HAP-1 (cell line): ENCODE measurements at regions of chr14 and their contacts with region 1.

Region 1: GRCh38 chr14:67583711-67584644 is 16.1 kb downstream of the PIGH start:
- DNase-seq: peak; percentile 32 to 62
- H3K4me3 ChIP-seq: no peak overlapping the region
- H3K4me1 ChIP-seq: no peaks in the 10 kb centered on the region
- H3K27me3 ChIP-seq: no peaks in the 10 kb centered on the region

Region 2: DNA sequence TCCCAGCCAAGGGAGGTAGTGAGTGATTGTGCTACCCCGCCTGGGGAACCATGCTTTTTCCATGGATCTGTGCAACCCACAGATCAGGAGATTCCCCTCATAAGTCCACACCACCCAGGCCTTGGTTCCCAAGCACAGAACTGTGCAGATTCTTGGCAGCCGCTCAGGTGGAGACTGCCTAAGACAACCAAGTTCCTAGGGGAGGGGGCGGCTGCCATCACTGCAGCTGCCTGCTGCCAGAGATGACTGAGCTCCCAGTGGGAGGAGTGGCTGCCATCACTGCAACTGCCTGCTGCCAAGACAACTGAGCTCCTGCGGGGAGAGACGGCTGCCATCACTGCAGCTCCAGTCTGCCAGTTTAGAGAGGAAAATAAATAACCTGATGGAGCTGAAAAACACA is 533.1 kb before region 1 on chr14:
- in situ Hi-C with region 1: no loop called
- DNase-seq: no peak
- H3K4me3 ChIP-seq: no peak overlapping the region
- H3K4me1 ChIP-seq: no peaks in the 10 kb centered on the region
- H3K27me3 ChIP-seq: no peaks in the 10 kb centered on the region

Region 3: GRCh38 chr14:67704484-67705089 is 120.6 kb after region 1 on chr14:
- in situ Hi-C with region 1: loop called (anchors 5 kb)
- DNase-seq: peak; percentile 51 to 75
- H3K4me3 ChIP-seq: no peak overlapping the region
- H3K4me1 ChIP-seq: no peaks in the 10 kb centered on the region
- H3K27me3 ChIP-seq: no peaks in the 10 kb centered on the region

Region 4: DNA sequence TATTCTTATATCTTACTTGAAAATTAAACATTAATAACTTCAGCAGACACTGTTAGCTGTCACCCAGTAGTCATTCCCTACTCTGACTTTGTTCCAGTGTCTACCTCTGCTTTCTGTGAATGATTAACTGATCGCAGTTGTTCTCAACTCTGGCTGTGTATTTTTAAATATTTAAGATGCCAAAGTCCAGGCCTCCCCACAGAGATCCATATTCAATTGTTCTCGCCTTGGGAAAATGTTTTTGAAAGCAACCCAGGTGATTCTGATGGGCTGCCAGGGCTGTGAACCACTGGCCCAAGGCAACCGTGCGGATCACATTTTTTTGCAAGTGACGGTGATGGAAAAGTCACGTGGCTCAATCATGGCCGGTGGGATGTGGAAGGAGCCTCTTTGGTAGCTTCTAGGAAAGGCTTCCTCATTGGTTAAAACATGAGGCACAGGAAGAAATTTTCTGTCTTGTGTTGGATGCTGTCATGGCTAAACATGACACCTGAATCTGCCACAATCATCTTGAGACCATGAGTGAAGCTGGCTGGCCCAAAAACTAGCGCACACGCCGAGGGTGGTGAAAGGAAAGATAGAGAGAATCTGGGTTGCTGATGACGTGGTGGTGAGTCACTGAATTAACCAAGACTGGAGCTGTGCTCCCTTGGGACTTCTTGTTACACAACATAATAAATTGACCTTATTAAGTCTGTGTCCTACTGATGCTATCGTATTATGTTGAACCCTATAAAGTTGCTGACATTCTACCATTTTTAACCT is 154.9 kb after region 1 on chr14:
- in situ Hi-C with region 1: no loop called
- DNase-seq: no peak
- H3K4me3 ChIP-seq: no peak overlapping the region
- H3K4me1 ChIP-seq: no peaks in the 10 kb centered on the region
- H3K27me3 ChIP-seq: no peaks in the 10 kb centered on the region